Colonic mucosa (tissue), 4 donors: ENCODE measurements at regions of chr3 and their contacts with region 1.

Region 1: DNA sequence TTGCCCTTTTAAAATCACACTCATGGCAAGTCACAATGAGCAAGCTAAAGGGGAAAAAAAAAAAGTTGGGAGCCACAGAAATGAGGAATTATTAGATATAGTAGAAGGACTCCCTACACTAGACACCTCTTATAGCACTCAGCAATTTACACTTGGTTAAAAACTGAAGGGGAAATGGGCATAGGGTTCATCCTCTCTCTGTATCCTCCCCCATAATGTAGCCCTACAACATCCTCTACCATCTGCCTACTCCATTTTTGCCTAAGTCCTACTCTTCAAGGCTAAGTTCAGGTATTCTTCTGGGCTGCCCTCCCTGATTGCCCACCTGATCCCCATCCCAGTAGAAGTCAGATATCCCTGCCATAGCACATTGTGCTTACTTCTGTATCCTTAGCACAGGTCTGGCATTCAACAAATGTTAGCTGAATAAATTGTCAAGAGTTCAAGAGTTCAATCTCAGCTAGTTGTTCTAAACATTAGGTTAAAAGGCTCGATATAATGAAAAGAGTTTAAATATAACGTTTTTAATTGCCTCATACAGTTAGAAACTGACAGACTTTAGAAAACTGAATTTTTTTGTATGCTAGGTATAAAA is 14.5 kb downstream of the SETD2 start:
- DNase-seq: no peak
- H3K4me3 ChIP-seq: no peak overlapping the region
- H3K27ac ChIP-seq: no peak overlapping the region
- H3K4me1 ChIP-seq: peaks cover 6% of the 10 kb centered on the region
- H3K27me3 ChIP-seq: no peaks in the 10 kb centered on the region
- CTCF ChIP-seq: no peak

Region 2: GRCh38 chr3:47035634-47036033 is 113.8 kb before region 1 on chr3:
- intact Hi-C with region 1: loop called (anchors 10 kb)
- DNase-seq: no peak
- H3K4me3 ChIP-seq: no peak overlapping the region
- H3K27ac ChIP-seq: peak overlapping the region; percentile 18
- H3K4me1 ChIP-seq: no peaks in the 10 kb centered on the region
- H3K27me3 ChIP-seq: no peaks in the 10 kb centered on the region
- CTCF ChIP-seq: no peak